ENCODE measurements at regions of chr19 and their contacts with region 1.

Region 1: DNA sequence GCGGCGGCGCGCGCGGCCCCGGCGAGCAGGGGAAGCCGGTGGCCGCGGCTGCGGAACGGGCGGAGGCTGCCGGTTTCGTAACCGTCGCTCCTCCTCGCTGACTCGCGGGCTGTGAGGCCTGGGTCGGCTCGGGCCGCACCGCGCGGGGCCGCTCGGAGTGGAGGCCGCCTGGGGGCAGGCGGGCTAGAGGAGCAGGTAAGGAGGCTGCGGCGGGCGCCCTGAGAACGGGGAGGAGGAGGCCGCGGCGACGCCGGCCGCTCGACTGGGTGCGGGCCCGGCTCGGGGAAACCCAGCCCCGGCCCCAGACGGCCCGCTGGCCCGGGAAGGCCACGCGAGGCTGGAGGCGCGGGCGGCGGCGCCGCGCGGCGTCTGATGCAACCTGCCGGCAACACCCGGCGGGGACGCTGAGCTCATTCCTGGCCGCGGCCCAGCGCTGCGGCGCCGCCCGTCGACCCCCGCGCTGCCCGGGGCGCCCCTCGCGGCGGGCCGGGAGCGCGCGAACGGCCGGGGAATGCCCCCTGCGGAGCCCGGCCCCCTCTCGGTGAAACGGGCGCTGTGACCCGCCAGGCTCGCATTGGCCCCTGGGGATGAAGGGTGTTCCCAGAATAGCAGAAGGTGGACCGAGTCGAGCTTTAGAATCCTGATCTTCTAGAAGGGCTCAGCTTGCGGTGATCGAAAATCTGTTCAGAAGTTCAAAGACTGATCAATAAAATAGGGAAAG is at the start of gene CEBPG:
- DNase-seq: peak; percentile 68 to 83 (median 79)
- ATAC-seq: peak; percentile 64
- H3K4me3 ChIP-seq: peak within 1 kb of the TSS; percentile 88
- H3K27ac ChIP-seq: peak within 1 kb of the TSS; percentile 99
- H3K4me1 ChIP-seq: peaks cover 19 to 21% of the 10 kb centered on the region in 2 experiments; a peak in 4 of 5 replicates
- H3K27me3 ChIP-seq: peaks cover 0 to 5% of the 10 kb centered on the region in 2 experiments; a peak in 1 of 5 replicates
- CTCF ChIP-seq: peak; percentile 34 to 66 (median 41); a peak in 4 of 6 replicates
- EP300 ChIP-seq: peak; percentile 80
- POLR2A ChIP-seq: peak; percentile 65
- RAD21 ChIP-seq: no peak
- polyA plus RNA-seq, gene CEBPG: 9.5 to 9.8 TPM

Region 2: GRCh38 chr19:33301144-33301899 is 72.5 kb before region 1 on chr19:
- CTCF ChIA-PET with region 1: no interaction called
- POLR2A ChIA-PET with region 1: interaction called, 14 read pairs
- in situ Hi-C with region 1: no loop called
- intact Hi-C with region 1: no loop called
- DNase-seq: no peak
- ATAC-seq: no peak
- H3K4me3 ChIP-seq: no peak overlapping the region
- H3K27ac ChIP-seq: no peak overlapping the region
- H3K4me1 ChIP-seq: peaks cover 6 to 39% of the 10 kb centered on the region in 2 experiments; a peak in 3 of 5 replicates
- H3K27me3 ChIP-seq: peaks cover 10 to 61% of the 10 kb centered on the region in 2 experiments; a peak in 3 of 5 replicates
- CTCF ChIP-seq: no peak
- EP300 ChIP-seq: no peak
- POLR2A ChIP-seq: no peak
- RAD21 ChIP-seq: no peak

Region 3: GRCh38 chr19:33358408-33358807 is 15.5 kb before region 1 on chr19:
- CTCF ChIA-PET with region 1: no interaction called
- POLR2A ChIA-PET with region 1: interaction called, 60 read pairs
- in situ Hi-C with region 1: no loop called
- intact Hi-C with region 1: no loop called
- DNase-seq: no peak
- ATAC-seq: no peak
- H3K4me3 ChIP-seq: no peak overlapping the region
- H3K27ac ChIP-seq: no peak overlapping the region
- H3K4me1 ChIP-seq: no peaks in the 10 kb centered on the region
- H3K27me3 ChIP-seq: peaks cover 11 to 33% of the 10 kb centered on the region in 2 experiments; a peak in 4 of 5 replicates
- CTCF ChIP-seq: no peak
- EP300 ChIP-seq: no peak
- POLR2A ChIP-seq: no peak
- RAD21 ChIP-seq: no peak

Region 4: DNA sequence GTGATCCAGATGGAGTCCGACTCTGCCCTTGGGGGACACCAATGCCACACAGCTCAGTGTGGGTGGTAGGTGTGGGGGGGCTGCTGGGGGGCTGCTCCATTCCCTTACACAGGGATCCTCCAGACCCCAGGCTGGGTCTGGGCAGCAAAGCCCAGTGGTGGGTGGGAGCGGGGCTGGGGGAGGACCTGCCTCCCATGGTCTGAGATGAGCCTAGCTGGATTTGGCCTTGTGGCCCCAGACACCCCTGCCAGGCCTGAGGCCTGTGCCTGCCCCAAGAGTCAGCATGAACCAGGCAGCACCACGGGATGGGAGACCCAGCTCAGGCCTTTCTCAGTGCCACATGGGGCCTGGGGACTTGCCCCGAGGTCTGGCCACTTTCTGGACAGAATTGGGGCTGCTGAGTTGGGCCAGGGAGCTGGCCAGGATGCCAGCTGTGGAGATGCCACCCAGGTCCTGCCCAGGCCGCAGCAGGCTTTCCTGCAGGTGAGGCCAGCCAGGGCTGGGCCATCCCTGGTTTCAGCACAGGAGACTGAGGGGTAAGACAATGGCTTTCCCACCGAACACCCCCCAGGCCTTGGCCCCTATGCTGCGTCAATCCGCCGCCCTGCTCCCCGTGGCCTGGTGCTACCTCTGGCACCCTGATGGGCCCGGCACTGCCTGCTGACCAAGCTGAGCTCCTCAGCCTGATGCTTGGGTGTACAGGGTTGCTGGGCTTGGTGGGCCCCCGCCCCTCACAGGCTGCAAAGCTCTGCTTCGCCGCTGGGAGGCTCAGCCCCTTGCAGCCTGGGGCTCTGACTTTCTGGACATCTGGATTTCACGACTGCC is 23.9 kb after region 1 on chr19:
- CTCF ChIA-PET with region 1: no interaction called
- POLR2A ChIA-PET with region 1: interaction called, 16 read pairs
- in situ Hi-C with region 1: no loop called
- intact Hi-C with region 1: no loop called
- DNase-seq: peak; percentile 44 to 70 (median 64)
- ATAC-seq: peak; percentile 87
- H3K4me3 ChIP-seq: no peak overlapping the region
- H3K27ac ChIP-seq: no peak overlapping the region
- H3K4me1 ChIP-seq: peaks cover 0 to 52% of the 10 kb centered on the region in 2 experiments; a peak in 2 of 5 replicates
- H3K27me3 ChIP-seq: peaks cover 0 to 21% of the 10 kb centered on the region in 2 experiments; a peak in 2 of 5 replicates
- CTCF ChIP-seq: peak; percentile 49 to 69 (median 69)
- EP300 ChIP-seq: no peak
- POLR2A ChIP-seq: no peak
- RAD21 ChIP-seq: peak in 1 of 2 experiments; percentile 35; a peak in 2 of 4 replicates

Region 5: GRCh38 chr19:33562636-33563035 is 188.8 kb after region 1 on chr19:
- CTCF ChIA-PET with region 1: no interaction called
- POLR2A ChIA-PET with region 1: no interaction called
- in situ Hi-C with region 1: no loop called
- intact Hi-C with region 1: no loop called
- DNase-seq: no peak
- ATAC-seq: no peak
- H3K4me3 ChIP-seq: no peak overlapping the region
- H3K27ac ChIP-seq: no peak overlapping the region
- H3K4me1 ChIP-seq: no peaks in the 10 kb centered on the region
- H3K27me3 ChIP-seq: peaks cover 4 to 30% of the 10 kb centered on the region in 2 experiments; a peak in 3 of 5 replicates
- CTCF ChIP-seq: no peak
- EP300 ChIP-seq: no peak
- POLR2A ChIP-seq: no peak
- RAD21 ChIP-seq: no peak